ENCODE measurements at regions of chr12 and their contacts with region 1.

Region 1: GRCh38 chr12:12577786-12578185 is 15.1 kb upstream of the DUSP16 start:
- DNase-seq: no peak
- ATAC-seq: no peak
- H3K4me3 ChIP-seq: no peak overlapping the region
- H3K27ac ChIP-seq: no peak overlapping the region
- H3K4me1 ChIP-seq: no peaks in the 10 kb centered on the region
- H3K27me3 ChIP-seq: no peaks in the 10 kb centered on the region
- CTCF ChIP-seq: no peak
- POLR2A ChIP-seq: no peak

Region 2: DNA sequence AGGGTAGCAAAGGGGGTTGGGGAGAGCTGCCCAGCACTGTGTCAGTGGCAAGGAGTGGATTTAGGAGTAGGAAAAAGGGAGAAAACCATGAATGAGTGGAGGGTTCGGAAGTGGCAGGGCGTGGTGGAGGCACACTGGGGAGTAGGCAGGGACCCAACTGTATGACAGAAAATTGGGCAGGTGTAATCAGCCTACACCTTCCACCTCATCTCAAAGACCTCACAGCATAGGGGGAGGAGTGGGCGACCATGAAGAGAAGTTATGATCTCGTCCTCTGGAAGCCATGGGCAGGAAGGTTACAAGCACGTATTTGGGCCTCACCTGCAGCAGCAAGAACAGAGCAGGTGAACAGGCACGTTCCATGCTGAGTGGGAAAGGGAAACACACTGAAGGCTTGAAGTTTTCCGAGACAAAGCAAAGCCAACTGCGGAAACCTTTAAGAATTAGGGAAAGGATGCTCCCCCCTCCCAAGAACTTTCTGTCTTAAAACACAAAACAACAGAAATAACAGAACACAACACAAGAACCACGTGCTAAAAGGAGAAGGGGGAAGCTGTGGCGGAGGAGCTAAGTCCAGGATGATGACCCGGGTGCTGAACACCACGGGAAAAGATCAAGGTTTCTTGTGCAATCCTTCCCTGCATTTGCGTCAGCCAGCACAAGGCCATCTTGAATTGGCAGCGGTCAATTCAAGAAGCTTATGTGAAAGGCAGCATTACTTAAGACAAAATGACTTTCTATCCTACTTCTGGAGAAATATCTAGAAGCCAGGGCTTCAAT is 22.7 kb after region 1 on chr12:
- intact Hi-C with region 1: loop called in 1 of 10 experiments (anchors 2 kb)
- DNase-seq: peak in 4 of 5 donors; percentile 26 to 35 (median 30)
- ATAC-seq: peak in 2 of 4 donors; percentile 52 to 64
- H3K4me3 ChIP-seq: no peak overlapping the region
- H3K27ac ChIP-seq: peak overlapping the region in 1 of 12 donors; percentile 72
- H3K4me1 ChIP-seq: peaks cover 0 to 13% (median 0%) of the 10 kb centered on the region in 12 donors
- H3K27me3 ChIP-seq: no peaks in the 10 kb centered on the region
- CTCF ChIP-seq: no peak
- POLR2A ChIP-seq: no peak

Measured in heart left ventricle (tissue), 16 donors.